MCF 10A (cell line): ENCODE measurements at regions of chr7 and their contacts with region 1.

Region 1: GRCh38 chr7:28347475-28348318 is 64.6 kb upstream of the CREB5 start:
- DNase-seq: peak; percentile 56
- H3K4me3 Mint-ChIP-seq: no peak overlapping the region
- H3K27ac Mint-ChIP-seq: peak overlapping the region; percentile 66
- H3K4me1 Mint-ChIP-seq: peaks cover 30% of the 10 kb centered on the region
- H3K27me3 Mint-ChIP-seq: no peaks in the 10 kb centered on the region
- CTCF ChIP-seq: no peak

Region 2: DNA sequence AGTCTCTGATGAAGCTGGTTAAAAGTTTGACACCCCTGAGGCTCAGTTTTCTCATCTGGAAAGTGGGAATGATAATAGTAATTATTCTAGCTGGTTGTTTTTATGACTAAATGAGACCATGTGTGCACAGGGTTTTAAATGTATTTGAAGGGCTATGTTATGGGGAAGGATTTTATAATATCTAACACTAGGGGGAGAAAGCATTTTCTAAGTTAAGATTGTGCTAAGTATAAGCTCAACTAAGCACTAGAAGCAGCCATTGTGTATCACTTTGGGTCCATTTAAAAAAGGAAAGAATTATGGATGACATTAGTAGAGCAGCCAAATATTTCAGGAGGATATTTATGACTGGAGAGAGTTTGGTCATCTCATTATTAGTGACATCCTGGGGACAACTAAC is 15.1 kb after region 1 on chr7:
- CTCF ChIA-PET with region 1: interaction called, 5 read pairs
- POLR2A ChIA-PET with region 1: interaction called, 40 read pairs
- intact Hi-C with region 1: no loop called
- DNase-seq: no peak
- H3K4me3 Mint-ChIP-seq: no peak overlapping the region
- H3K27ac Mint-ChIP-seq: no peak overlapping the region
- H3K4me1 Mint-ChIP-seq: peaks cover 17% of the 10 kb centered on the region
- H3K27me3 Mint-ChIP-seq: no peaks in the 10 kb centered on the region
- CTCF ChIP-seq: no peak